Heart left ventricle (tissue), 16 donors: ENCODE measurements at regions of chr2 and their contacts with region 1.

Region 1: GRCh38 chr2:13193898-13194297 is 477.2 kb downstream of the TRIB2 start:
- DNase-seq: no peak
- ATAC-seq: no peak
- H3K4me3 ChIP-seq: no peak overlapping the region
- H3K27ac ChIP-seq: no peak overlapping the region
- H3K4me1 ChIP-seq: no peaks in the 10 kb centered on the region
- H3K27me3 ChIP-seq: no peaks in the 10 kb centered on the region
- CTCF ChIP-seq: peak in 9 of 12 donors; percentile 12 to 55 (median 31)
- POLR2A ChIP-seq: no peak

Region 2: DNA sequence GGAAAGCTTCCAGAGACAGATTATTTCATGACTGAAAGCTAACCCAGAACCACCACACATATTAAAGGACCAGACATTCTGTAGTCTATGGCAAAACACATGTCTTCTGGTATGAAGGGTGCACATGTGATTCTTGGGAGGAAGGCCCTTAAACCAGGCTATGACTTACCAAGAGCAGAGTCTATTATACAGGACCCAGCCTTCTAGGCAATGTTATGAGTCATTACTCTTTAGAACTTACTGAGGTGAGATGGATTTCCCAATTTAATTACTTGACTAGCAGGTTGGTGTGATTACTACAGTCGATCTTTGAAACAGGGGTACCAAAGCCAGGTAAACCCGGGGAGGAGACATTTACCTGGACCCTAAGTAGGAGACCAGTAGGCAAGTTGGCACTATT is 126.4 kb before region 1 on chr2:
- intact Hi-C with region 1: loop called in 1 of 10 experiments (anchors 10 kb)
- DNase-seq: no peak
- ATAC-seq: no peak
- H3K4me3 ChIP-seq: no peak overlapping the region
- H3K27ac ChIP-seq: no peak overlapping the region
- H3K4me1 ChIP-seq: peaks cover 0 to 4% (median 0%) of the 10 kb centered on the region in 12 donors
- H3K27me3 ChIP-seq: no peaks in the 10 kb centered on the region
- CTCF ChIP-seq: no peak
- POLR2A ChIP-seq: no peak

Region 3: DNA sequence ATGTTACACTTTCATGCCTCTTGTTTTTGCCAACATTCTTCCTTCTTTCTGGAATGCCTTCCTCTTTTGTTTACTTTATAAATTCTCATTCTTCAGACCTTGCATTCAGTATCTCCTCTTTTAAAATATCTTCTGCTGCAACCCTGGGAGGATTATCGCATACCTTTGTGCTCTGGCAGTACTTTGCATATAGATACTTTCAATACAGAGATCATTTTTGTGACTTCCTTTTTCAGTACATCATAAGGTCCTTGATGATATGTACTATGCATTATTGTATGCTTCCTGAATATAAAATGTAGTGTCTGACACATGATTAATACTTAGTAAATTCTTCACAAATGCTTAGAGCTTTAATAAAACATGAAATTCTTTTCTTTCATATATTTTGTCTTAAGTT is 61.6 kb after region 1 on chr2:
- intact Hi-C with region 1: no loop called
- DNase-seq: no peak
- ATAC-seq: no peak
- H3K4me3 ChIP-seq: no peak overlapping the region
- H3K27ac ChIP-seq: no peak overlapping the region
- H3K4me1 ChIP-seq: no peaks in the 10 kb centered on the region
- H3K27me3 ChIP-seq: no peaks in the 10 kb centered on the region
- CTCF ChIP-seq: no peak
- POLR2A ChIP-seq: no peak

Region 4: GRCh38 chr2:13266166-13266565 is 72.3 kb after region 1 on chr2:
- intact Hi-C with region 1: no loop called
- DNase-seq: no peak
- ATAC-seq: no peak
- H3K4me3 ChIP-seq: no peak overlapping the region
- H3K27ac ChIP-seq: no peak overlapping the region
- H3K4me1 ChIP-seq: no peaks in the 10 kb centered on the region
- H3K27me3 ChIP-seq: no peaks in the 10 kb centered on the region
- CTCF ChIP-seq: no peak
- POLR2A ChIP-seq: no peak

Region 5: DNA sequence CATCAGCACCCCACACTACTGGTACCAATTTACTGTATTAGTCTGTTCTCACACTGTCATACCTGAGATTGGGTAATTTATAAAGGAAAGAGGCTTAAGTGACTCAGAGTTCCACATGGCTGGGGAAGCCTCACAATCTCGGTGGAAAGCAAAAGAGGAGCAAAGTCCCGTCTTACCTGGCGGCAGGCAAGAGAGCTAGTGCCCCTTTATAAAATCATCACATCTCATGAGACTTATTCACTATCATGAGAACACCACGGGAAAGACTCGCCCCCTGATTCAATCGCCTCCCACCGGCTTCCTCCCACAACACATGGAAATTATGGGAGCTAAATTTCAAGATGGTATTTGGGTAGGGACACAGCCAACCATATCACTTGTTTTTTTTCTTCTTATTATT is 240.1 kb after region 1 on chr2:
- intact Hi-C with region 1: no loop called
- DNase-seq: no peak
- ATAC-seq: no peak
- H3K4me3 ChIP-seq: no peak overlapping the region
- H3K27ac ChIP-seq: no peak overlapping the region
- H3K4me1 ChIP-seq: no peaks in the 10 kb centered on the region
- H3K27me3 ChIP-seq: no peaks in the 10 kb centered on the region
- CTCF ChIP-seq: no peak
- POLR2A ChIP-seq: no peak